ENCODE measurements at regions of chr14 and their contacts with region 1.

Region 1: DNA sequence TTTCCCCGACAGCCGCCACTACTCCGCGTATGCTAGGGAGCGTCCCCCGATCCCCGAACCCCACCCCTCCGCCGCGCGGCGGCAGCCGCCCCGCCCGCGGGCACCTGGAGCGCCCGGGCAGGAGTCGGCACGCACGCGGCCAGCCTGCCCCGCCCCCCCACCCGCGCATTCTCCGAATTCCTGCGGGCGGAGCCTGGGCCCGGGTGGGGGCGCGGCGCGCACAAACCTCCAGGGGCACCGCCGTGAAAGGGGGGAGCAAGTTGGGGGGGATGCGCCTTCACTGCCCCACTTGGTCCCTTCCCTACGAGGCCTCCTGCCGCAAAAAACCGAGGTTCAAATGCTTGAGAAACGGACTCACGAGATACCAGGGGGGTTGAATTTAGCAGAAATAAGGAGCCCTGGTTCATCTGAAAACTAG is 1.7 kb downstream of the AJUBA start:
- DNase-seq: peak; percentile 62 to 73
- H3K4me3 ChIP-seq: peak overlapping the region; percentile 67 to 96 (median 89)
- H3K27ac ChIP-seq: peak overlapping the region; percentile 88 to 90
- H3K4me1 ChIP-seq: peaks cover 5 to 24% of the 10 kb centered on the region in 2 donors
- H3K27me3 ChIP-seq: peaks cover 0 to 3% of the 10 kb centered on the region in 2 donors
- CTCF ChIP-seq: no peak
- POLR2A ChIP-seq: no peak

Region 2: GRCh38 chr14:23054000-23054811 is 73.5 kb after region 1 on chr14:
- intact Hi-C with region 1: loop called (anchors 1 kb)
- DNase-seq: no peak
- H3K4me3 ChIP-seq: no peak overlapping the region
- H3K27ac ChIP-seq: no peak overlapping the region
- H3K4me1 ChIP-seq: peaks cover 0 to 9% of the 10 kb centered on the region in 2 donors
- H3K27me3 ChIP-seq: no peaks in the 10 kb centered on the region
- CTCF ChIP-seq: no peak
- POLR2A ChIP-seq: no peak